ENCODE measurements at regions of chr2 and their contacts with region 1.

Region 1: GRCh38 chr2:174039551-174040416 is 74.6 kb upstream of the SP3 start:
- DNase-seq: peak; percentile 65 to 93 (median 78)
- ATAC-seq: peak; percentile 95
- H3K4me3 ChIP-seq: peak overlapping the region; percentile 44
- H3K4me3 Mint-ChIP-seq: peak overlapping the region; percentile 49
- H3K27ac ChIP-seq: peak overlapping the region; percentile 76 to 78
- H3K27ac Mint-ChIP-seq: peak overlapping the region; percentile 79
- H3K4me1 ChIP-seq: peaks cover 9% of the 10 kb centered on the region
- H3K4me1 Mint-ChIP-seq: peaks cover 9% of the 10 kb centered on the region
- H3K27me3 ChIP-seq: no peaks in the 10 kb centered on the region
- H3K27me3 Mint-ChIP-seq: peaks cover 6% of the 10 kb centered on the region
- CTCF ChIP-seq: peak; percentile 82

Region 2: DNA sequence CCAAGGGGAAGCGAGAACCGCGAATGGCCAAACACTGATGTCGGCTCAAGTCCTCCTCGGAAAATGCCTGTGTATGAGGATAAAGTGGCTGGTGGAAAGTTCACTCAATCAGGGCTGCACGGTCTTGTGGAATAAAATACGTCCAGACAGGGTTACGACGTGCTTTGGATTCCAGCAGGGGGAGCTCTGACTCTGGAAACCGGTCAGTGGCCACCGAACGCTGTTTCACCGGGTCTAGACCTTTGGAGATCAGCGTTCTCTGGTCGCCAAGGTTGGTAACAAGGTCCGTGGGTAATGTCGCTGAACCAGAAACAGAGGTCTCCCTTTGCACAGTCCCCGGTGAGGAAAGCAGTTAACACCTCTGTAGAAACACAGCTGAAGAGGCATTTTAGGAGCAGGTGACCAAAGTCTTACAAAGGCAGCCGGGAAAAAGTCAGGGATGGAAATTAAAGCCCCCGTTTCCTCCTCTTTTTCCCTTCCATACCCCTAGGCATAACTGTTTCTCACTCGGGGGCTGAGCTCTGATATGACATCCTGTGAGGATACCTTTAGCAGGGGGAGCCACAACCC is 637.3 kb before region 1 on chr2:
- CTCF ChIA-PET with region 1: no interaction called
- POLR2A ChIA-PET with region 1: no interaction called
- intact Hi-C with region 1: loop called in 1 of 2 experiments (anchors 2 kb)
- DNase-seq: peak; percentile 49 to 83 (median 63)
- ATAC-seq: peak; percentile 74
- H3K4me3 ChIP-seq: no peak overlapping the region
- H3K4me3 Mint-ChIP-seq: no peak overlapping the region
- H3K27ac ChIP-seq: no peak overlapping the region
- H3K27ac Mint-ChIP-seq: no peak overlapping the region
- H3K4me1 ChIP-seq: peaks cover 5% of the 10 kb centered on the region
- H3K4me1 Mint-ChIP-seq: peaks cover 5% of the 10 kb centered on the region
- H3K27me3 ChIP-seq: peaks cover 22 to 61% of the 10 kb centered on the region in 2 experiments
- H3K27me3 Mint-ChIP-seq: peaks cover 67% of the 10 kb centered on the region
- CTCF ChIP-seq: peak; percentile 87

Region 3: DNA sequence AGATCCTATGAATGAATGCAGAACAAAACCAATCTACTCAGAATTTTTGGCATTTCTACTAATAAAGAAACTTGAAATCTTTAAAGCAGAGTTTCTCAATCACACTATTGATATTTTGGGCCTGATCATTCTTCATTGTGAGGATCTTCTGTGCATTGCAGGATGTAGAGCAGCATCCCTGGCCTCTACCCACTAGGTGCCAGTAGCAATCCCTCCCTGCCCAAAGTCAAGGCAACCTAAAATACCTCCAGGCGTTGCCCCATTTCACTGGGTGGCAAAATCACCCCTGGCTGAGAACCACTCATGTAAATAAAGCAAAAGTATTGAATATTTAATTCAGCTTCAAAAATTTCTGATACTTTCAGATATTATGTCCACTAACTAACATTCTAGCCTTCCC is 287.6 kb before region 1 on chr2:
- CTCF ChIA-PET with region 1: no interaction called
- POLR2A ChIA-PET with region 1: no interaction called
- intact Hi-C with region 1: loop called in 1 of 2 experiments (anchors 10 kb)
- DNase-seq: peak in 3 of 14 experiments; percentile 12 to 16 (median 13)
- ATAC-seq: no peak
- H3K4me3 ChIP-seq: no peak overlapping the region
- H3K4me3 Mint-ChIP-seq: no peak overlapping the region
- H3K27ac ChIP-seq: no peak overlapping the region
- H3K27ac Mint-ChIP-seq: no peak overlapping the region
- H3K4me1 ChIP-seq: no peaks in the 10 kb centered on the region
- H3K4me1 Mint-ChIP-seq: no peaks in the 10 kb centered on the region
- H3K27me3 ChIP-seq: no peaks in the 10 kb centered on the region
- H3K27me3 Mint-ChIP-seq: no peaks in the 10 kb centered on the region
- CTCF ChIP-seq: no peak

Region 4: GRCh38 chr2:173884025-173884802 is 155.6 kb before region 1 on chr2:
- CTCF ChIA-PET with region 1: interaction called, 3 read pairs
- POLR2A ChIA-PET with region 1: no interaction called
- intact Hi-C with region 1: loop called in 1 of 2 experiments (anchors 5 kb)
- DNase-seq: peak in 12 of 14 experiments; percentile 3 to 59 (median 25)
- ATAC-seq: no peak
- H3K4me3 ChIP-seq: no peak overlapping the region
- H3K4me3 Mint-ChIP-seq: no peak overlapping the region
- H3K27ac ChIP-seq: no peak overlapping the region
- H3K27ac Mint-ChIP-seq: no peak overlapping the region
- H3K4me1 ChIP-seq: no peaks in the 10 kb centered on the region
- H3K4me1 Mint-ChIP-seq: no peaks in the 10 kb centered on the region
- H3K27me3 ChIP-seq: peaks cover 0 to 6% of the 10 kb centered on the region in 2 experiments
- H3K27me3 Mint-ChIP-seq: peaks cover 39% of the 10 kb centered on the region
- CTCF ChIP-seq: peak; percentile 50

Region 5: GRCh38 chr2:173965329-173966025 is 74.3 kb before region 1 on chr2 and contains the start of gene SP3:
- CTCF ChIA-PET with region 1: no interaction called
- POLR2A ChIA-PET with region 1: interaction called, 4 read pairs
- intact Hi-C with region 1: loop called (anchors 1 to 5 kb)
- DNase-seq: peak; percentile 91 to 98 (median 95)
- ATAC-seq: peak; percentile 65
- H3K4me3 ChIP-seq: peak within 1 kb of the TSS; percentile 85
- H3K4me3 Mint-ChIP-seq: peak within 1 kb of the TSS; percentile 99
- H3K27ac ChIP-seq: peak within 1 kb of the TSS; percentile 95 to 99
- H3K27ac Mint-ChIP-seq: peak within 1 kb of the TSS; percentile 98
- H3K4me1 ChIP-seq: peaks cover 14% of the 10 kb centered on the region
- H3K4me1 Mint-ChIP-seq: peaks cover 45% of the 10 kb centered on the region
- H3K27me3 ChIP-seq: no peaks in the 10 kb centered on the region
- H3K27me3 Mint-ChIP-seq: no peaks in the 10 kb centered on the region
- CTCF ChIP-seq: no peak
- total RNA-seq, gene SP3: 159 to 166 TPM

Region 6: DNA sequence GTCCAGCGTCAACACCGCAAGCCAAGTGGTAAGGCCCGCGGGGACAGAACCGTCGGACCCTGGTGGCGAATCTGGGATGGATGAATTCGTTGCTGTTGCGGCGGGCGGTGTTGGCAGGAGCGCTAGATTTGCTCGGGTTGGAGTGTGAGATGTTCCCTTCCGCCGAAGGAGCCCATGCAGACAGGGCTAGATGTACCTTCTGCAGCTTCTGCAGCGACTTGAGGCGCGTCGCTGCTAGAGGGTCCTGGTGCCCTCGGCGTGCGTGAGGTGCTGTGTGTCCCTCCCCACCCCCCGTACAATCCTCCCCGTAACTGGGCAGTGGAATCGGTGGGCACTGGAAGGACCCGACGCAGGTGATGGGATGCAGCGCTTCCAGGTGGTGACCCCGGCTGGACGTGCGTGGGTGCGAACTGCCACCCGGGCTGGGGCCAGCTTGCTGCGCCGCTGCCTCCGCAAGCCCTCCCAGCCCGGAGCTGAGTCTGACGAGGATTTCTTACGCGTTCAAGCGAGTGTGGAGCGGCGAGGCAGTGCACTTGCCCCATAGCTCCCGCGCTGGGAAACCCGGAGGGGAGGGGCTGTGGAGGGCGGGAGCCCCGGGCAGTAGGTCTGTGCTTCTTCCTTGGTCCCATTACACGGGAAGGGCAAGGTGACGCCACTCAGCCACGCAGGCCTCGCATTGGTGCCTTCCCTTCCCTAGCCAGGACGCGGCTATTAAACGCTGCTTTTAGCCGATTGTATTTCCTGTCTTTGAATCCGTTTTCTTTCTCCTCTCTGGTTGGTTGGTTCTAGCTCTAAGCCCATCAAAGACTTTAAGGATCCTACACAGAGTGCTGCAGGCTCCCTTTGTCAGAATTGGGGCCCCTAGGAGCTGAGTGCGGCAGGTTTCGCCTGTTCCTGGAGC is 690.3 kb after region 1 on chr2:
- CTCF ChIA-PET with region 1: no interaction called
- POLR2A ChIA-PET with region 1: no interaction called
- intact Hi-C with region 1: no loop called
- DNase-seq: peak in 9 of 14 experiments; percentile 12 to 68 (median 43)
- ATAC-seq: peak; percentile 77
- H3K4me3 ChIP-seq: peak overlapping the region; percentile 76
- H3K4me3 Mint-ChIP-seq: peak overlapping the region; percentile 90
- H3K27ac ChIP-seq: no peak overlapping the region
- H3K27ac Mint-ChIP-seq: no peak overlapping the region
- H3K4me1 ChIP-seq: peaks cover 27% of the 10 kb centered on the region
- H3K4me1 Mint-ChIP-seq: peaks cover 18% of the 10 kb centered on the region
- H3K27me3 ChIP-seq: peaks cover 3 to 4% of the 10 kb centered on the region in 2 experiments
- H3K27me3 Mint-ChIP-seq: peaks cover 33% of the 10 kb centered on the region
- CTCF ChIP-seq: no peak

Region 7: GRCh38 chr2:175709248-175709647 is 1669.5 kb after region 1 on chr2:
- CTCF ChIA-PET with region 1: no interaction called
- POLR2A ChIA-PET with region 1: no interaction called
- intact Hi-C with region 1: no loop called
- DNase-seq: no peak
- ATAC-seq: no peak
- H3K4me3 ChIP-seq: no peak overlapping the region
- H3K4me3 Mint-ChIP-seq: no peak overlapping the region
- H3K27ac ChIP-seq: no peak overlapping the region
- H3K27ac Mint-ChIP-seq: no peak overlapping the region
- H3K4me1 ChIP-seq: no peaks in the 10 kb centered on the region
- H3K4me1 Mint-ChIP-seq: no peaks in the 10 kb centered on the region
- H3K27me3 ChIP-seq: peaks cover 6 to 9% of the 10 kb centered on the region in 2 experiments
- H3K27me3 Mint-ChIP-seq: peaks cover 46% of the 10 kb centered on the region
- CTCF ChIP-seq: no peak

Measured in CD4-positive, alpha-beta T cell (primary cell).